ENCODE measurements at regions of chr12 and their contacts with region 1.

Region 1: DNA sequence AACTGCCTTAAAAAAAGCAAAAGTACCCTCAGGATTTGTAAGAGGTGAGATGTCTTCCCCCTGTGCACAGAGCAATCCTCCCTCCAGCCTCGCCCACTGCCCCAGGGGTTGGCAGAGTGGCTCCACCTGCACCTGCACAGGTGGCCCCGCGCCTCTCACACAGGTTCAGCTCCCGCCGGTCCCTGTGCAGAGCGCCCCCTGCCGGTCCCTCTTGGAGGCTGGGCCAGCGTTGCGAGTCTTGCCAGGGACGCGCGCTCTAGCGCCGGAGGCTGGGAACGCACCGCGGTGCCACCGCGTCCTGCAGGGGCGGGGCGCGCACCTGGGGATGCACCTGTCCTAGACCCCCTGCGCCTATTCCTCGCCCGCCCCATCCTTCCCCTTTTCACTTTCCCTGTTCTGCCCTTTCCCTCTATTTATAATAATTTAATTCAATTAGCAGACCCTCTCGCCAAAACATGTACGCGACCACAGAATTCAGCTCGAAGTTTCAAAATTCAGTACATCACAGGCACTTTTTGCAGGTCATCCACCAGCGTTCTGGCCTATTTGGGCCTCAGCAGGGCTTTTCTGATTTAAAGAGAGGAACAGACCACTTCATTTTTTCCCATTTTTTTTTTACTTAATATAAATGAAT is 618.6 kb downstream of the AACS start:
- DNase-seq: peak; percentile 13
- H3K4me3 Mint-ChIP-seq: no peak overlapping the region
- H3K27ac Mint-ChIP-seq: no peak overlapping the region
- H3K4me1 Mint-ChIP-seq: no peaks in the 10 kb centered on the region
- H3K27me3 Mint-ChIP-seq: no peaks in the 10 kb centered on the region

Region 2: DNA sequence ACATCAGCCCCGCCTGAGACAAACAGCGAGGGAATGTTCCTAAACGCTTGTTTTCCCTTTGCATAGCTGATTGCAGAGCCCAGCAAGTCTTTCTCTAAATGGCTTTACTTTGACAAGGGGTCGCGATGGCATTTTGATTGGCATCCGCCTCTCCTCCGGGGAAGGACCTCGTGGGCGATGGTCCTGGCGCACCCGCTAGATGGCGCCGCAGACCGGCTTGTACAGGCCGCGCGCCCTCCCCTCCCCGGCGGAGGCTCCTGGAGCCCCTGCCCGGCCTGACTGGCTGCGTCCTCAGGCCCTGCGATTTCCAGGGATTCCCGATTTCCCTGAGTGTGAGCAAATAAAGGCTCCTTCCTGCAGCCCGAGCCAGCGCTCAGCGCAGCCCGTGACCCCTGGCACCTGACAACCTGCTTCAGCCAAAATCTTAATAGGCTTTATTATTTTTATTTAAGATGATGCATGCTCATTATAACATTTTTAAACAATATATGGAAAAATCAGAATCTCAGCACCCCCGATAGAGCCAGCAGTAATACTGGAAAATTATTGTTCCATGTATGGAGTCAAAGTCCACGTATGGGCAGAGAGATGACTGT is 150.3 kb before region 1 on chr12:
- intact Hi-C with region 1: loop called (anchors 5 kb)
- DNase-seq: no peak
- H3K4me3 Mint-ChIP-seq: no peak overlapping the region
- H3K27ac Mint-ChIP-seq: no peak overlapping the region
- H3K4me1 Mint-ChIP-seq: no peaks in the 10 kb centered on the region
- H3K27me3 Mint-ChIP-seq: no peaks in the 10 kb centered on the region

Measured in activated T-helper 2 cell treated with anti-CD3 and anti-CD28 coated beads, Interferon-gamma antibody, Interleukin-2, Interleukin-4, amounts not matched to agents 10 μg/mL and 5 μg/mL and 100 μg/mL, durations not matched to agents 14 hours and 24 hours and 36 hours (primary cell).